ENCODE measurements at regions of chr4 and their contacts with region 1.

Region 1: DNA sequence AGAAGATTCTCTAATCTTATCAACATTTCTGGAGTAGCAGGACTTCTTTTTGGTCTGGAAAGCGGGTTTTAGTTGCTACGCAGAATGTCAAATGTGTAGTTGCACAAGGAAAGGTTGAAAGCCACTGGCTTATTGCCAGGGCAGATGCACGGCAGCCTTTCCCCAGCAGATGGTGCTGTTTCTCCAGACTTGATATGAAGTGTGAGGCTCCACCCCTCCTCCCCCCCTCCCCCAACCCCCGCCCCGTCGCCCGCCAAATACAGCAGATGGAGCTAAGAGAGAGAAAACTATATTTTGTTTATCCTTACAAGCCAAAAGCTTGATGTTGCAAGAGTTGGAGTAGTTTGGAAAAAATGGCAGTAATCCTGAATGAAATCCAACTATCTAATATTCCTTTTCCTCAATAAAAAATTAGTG is 32.0 kb downstream of the ENOPH1 start:
- DNase-seq: peak; percentile 82 to 92
- ATAC-seq: peak; percentile 94
- H3K4me3 ChIP-seq: no peak overlapping the region
- H3K27ac ChIP-seq: no peak overlapping the region
- H3K4me1 ChIP-seq: no peaks in the 10 kb centered on the region
- H3K27me3 ChIP-seq: no peaks in the 10 kb centered on the region

Region 2: GRCh38 chr4:82798168-82799005 is 336.0 kb after region 1 on chr4 and contains the start of gene SCD5:
- intact Hi-C with region 1: loop called (anchors 5 to 10 kb)
- DNase-seq: peak; percentile 79 to 88
- ATAC-seq: peak; percentile 91
- H3K4me3 ChIP-seq: peak within 1 kb of the TSS; percentile 70 to 75
- H3K27ac ChIP-seq: no peak within 1 kb of the TSS
- H3K4me1 ChIP-seq: peaks cover 0 to 2% of the 10 kb centered on the region in 2 donors
- H3K27me3 ChIP-seq: no peaks in the 10 kb centered on the region
- total RNA-seq, gene SCD5: 6.0 to 11.5 TPM

Region 3: DNA sequence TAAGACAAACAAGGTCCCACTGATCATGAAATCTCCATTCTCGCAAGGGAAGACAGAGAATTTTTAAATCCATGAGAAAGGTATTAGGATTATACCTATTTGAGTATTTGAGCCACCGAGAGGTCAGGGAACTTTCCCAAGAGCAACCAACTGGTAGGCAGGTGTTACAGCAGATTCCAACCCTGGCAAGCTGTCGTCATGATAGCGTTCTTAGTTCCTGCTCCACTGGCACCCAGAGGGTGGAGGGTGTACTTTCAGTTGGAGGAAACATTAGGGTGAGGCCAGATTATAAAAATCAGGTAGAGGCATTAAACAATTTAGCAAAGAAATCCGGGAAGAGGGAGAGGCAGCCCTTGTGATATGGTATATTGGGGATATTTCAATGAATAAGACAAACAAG is 798.9 kb after region 1 on chr4:
- intact Hi-C with region 1: loop called (anchors 2 to 5 kb)
- DNase-seq: no peak
- ATAC-seq: no peak
- H3K4me3 ChIP-seq: no peak overlapping the region
- H3K27ac ChIP-seq: no peak overlapping the region
- H3K4me1 ChIP-seq: no peaks in the 10 kb centered on the region
- H3K27me3 ChIP-seq: no peaks in the 10 kb centered on the region

Region 4: GRCh38 chr4:83284193-83285054 is 822.0 kb after region 1 on chr4 and contains the start of gene COQ2:
- intact Hi-C with region 1: loop called in 1 of 2 experiments (anchors 5 kb)
- DNase-seq: peak; percentile 97 to 99
- ATAC-seq: peak; percentile 97
- H3K4me3 ChIP-seq: peak within 1 kb of the TSS; percentile 50 to 70
- H3K27ac ChIP-seq: peak within 1 kb of the TSS; percentile 32 to 72
- H3K4me1 ChIP-seq: peaks cover 0 to 2% of the 10 kb centered on the region in 2 donors
- H3K27me3 ChIP-seq: no peaks in the 10 kb centered on the region
- total RNA-seq, gene COQ2: 6.6 to 7.6 TPM

Region 5: GRCh38 chr4:83639849-83640493 is 1177.5 kb after region 1 on chr4:
- intact Hi-C with region 1: loop called in 1 of 2 experiments (anchors 10 kb)
- DNase-seq: no peak
- ATAC-seq: peak; percentile 79
- H3K4me3 ChIP-seq: no peak overlapping the region
- H3K27ac ChIP-seq: no peak overlapping the region
- H3K4me1 ChIP-seq: no peaks in the 10 kb centered on the region
- H3K27me3 ChIP-seq: no peaks in the 10 kb centered on the region